Caco-2 (cell line): ENCODE measurements at regions of chr15 and their contacts with region 1.

Region 1: GRCh38 chr15:31096563-31096962 is 5.0 kb downstream of the TRPM1 start:
- DNase-seq: no peak
- H3K4me3 ChIP-seq: no peak overlapping the region
- H3K4me3 Mint-ChIP-seq: no peak overlapping the region
- H3K27ac Mint-ChIP-seq: no peak overlapping the region
- H3K4me1 ChIP-seq: 0 out of 2 replicates have a peak, but pooled peaks cover 3% of the 10 kb centered on the region
- H3K4me1 Mint-ChIP-seq: peaks cover 14% of the 10 kb centered on the region
- H3K27me3 ChIP-seq: no peaks in the 10 kb centered on the region
- H3K27me3 Mint-ChIP-seq: no peaks in the 10 kb centered on the region
- CTCF ChIP-seq: no peak

Region 2: GRCh38 chr15:31058236-31058962 is 38.2 kb before region 1 on chr15:
- CTCF ChIA-PET with region 1: no interaction called
- POLR2A ChIA-PET with region 1: no interaction called
- intact Hi-C with region 1: no loop called
- DNase-seq: no peak
- H3K4me3 ChIP-seq: no peak overlapping the region
- H3K4me3 Mint-ChIP-seq: no peak overlapping the region
- H3K27ac Mint-ChIP-seq: no peak overlapping the region
- H3K4me1 ChIP-seq: no peaks in the 10 kb centered on the region
- H3K4me1 Mint-ChIP-seq: no peaks in the 10 kb centered on the region
- H3K27me3 ChIP-seq: no peaks in the 10 kb centered on the region
- H3K27me3 Mint-ChIP-seq: no peaks in the 10 kb centered on the region
- CTCF ChIP-seq: no peak

Region 3: DNA sequence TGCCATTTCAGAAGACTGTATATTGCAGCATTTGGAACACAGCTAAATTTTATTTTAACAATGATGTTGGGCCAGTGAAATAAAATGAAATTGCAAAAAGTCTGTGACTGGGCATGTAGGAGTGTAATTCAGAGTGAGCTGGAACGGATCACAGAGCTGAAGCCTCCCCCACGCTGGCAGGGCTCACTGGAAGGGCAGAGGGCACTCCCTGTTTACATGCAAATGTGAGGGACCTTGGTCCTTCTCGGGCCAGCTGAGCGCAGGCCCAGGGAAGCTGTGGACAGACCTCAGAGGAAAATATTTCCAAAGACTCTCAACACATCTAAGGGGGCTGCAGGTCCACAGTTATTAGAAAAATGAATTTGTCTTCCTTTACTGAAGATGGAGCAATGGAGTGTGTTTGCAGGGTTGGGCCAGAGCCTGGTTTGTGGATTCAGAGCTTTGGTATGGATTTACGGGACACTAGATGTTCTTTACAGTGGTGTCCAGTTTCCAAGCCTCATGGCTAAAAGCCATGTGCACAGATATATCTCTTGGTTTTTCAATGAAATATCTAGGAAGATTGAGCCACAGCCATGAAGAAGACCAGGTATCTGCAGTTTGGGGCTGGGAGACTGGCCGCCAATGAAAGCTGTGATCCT is 27.1 kb before region 1 on chr15:
- CTCF ChIA-PET with region 1: no interaction called
- POLR2A ChIA-PET with region 1: no interaction called
- intact Hi-C with region 1: loop called (anchors 2 kb)
- DNase-seq: no peak
- H3K4me3 ChIP-seq: no peak overlapping the region
- H3K4me3 Mint-ChIP-seq: no peak overlapping the region
- H3K27ac Mint-ChIP-seq: no peak overlapping the region
- H3K4me1 ChIP-seq: peaks cover 3% of the 10 kb centered on the region; the same call in 1 of the 2 replicates
- H3K4me1 Mint-ChIP-seq: peaks cover 8% of the 10 kb centered on the region
- H3K27me3 ChIP-seq: no peaks in the 10 kb centered on the region
- H3K27me3 Mint-ChIP-seq: no peaks in the 10 kb centered on the region
- CTCF ChIP-seq: no peak

Region 4: DNA sequence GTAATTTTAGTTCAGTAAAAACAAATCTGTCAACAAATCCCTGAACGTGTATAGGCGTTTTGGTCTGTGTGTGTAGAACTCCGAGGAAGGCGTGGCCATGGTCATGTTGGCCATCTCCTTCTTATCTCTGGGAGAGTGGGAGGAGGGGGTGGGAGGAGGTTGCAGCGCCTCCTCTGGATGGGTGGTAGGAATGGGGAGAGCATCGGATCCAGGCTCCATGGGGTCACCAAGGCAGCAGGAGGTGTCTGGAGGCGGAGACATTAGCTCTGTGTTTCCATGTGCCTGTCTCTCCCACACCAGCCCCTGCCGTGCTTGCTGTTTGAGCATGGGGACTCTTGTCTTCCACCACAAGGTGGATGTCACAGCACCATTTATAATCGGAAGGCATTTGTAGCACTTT is 39.5 kb after region 1 on chr15:
- CTCF ChIA-PET with region 1: no interaction called
- POLR2A ChIA-PET with region 1: no interaction called
- intact Hi-C with region 1: no loop called
- DNase-seq: peak in 1 of 2 experiments; percentile 33
- H3K4me3 ChIP-seq: no peak overlapping the region
- H3K4me3 Mint-ChIP-seq: no peak overlapping the region
- H3K27ac Mint-ChIP-seq: no peak overlapping the region
- H3K4me1 ChIP-seq: no peaks in the 10 kb centered on the region
- H3K4me1 Mint-ChIP-seq: no peaks in the 10 kb centered on the region
- H3K27me3 ChIP-seq: no peaks in the 10 kb centered on the region
- H3K27me3 Mint-ChIP-seq: no peaks in the 10 kb centered on the region
- CTCF ChIP-seq: peak in 1 of 2 experiments; percentile 38

Region 5: DNA sequence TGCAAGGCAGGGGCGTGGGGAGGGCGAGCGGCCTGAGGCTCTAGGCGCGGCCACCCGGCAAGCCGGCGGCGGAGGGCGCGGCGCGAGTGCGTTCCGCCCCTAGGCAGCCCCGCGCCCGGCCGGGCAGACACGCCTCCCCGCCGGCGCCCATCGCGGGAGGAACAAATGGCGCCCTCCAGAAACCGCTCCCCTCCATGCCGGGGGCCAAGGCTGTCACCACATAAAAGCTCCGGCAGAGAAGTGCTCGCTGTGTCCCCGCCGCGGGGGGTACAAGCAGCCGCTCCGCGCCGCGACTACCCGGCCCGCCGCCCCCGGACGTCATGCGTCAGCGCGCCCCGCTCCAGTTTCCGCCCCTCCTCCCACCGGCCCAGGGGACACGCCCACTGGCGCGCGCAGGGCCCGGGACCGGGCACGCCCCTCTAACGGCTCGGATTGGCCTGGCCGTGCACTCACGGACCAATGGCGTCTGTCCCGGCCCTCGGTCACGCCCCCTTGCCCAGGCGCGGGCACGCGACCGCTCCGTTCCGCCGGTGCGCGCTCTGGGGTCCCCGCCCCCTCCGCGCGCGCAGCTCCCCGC is 229.7 kb after region 1 on chr15:
- CTCF ChIA-PET with region 1: no interaction called
- POLR2A ChIA-PET with region 1: no interaction called
- intact Hi-C with region 1: no loop called
- DNase-seq: peak; percentile 97 to 99
- H3K4me3 ChIP-seq: peak overlapping the region; percentile 92
- H3K4me3 Mint-ChIP-seq: peak overlapping the region; percentile 86
- H3K27ac Mint-ChIP-seq: peak overlapping the region; percentile 76
- H3K4me1 ChIP-seq: peaks cover 11% of the 10 kb centered on the region
- H3K4me1 Mint-ChIP-seq: no peaks in the 10 kb centered on the region
- H3K27me3 ChIP-seq: no peaks in the 10 kb centered on the region
- H3K27me3 Mint-ChIP-seq: no peaks in the 10 kb centered on the region
- CTCF ChIP-seq: no peak